Activated CD4-positive, alpha-beta T cell treated with anti-CD3 and anti-CD28 coated beads, Interleukin-2, amount 10 ng/mL, durations not matched to agents 7 days and 5 days (primary cell): ENCODE measurements at regions of chr14 and their contacts with region 1.

Region 1: GRCh38 chr14:103104654-103105452 is 10.3 kb downstream of the EXOC3L4 start:
- DNase-seq: peak; percentile 70
- H3K4me3 Mint-ChIP-seq: no peak overlapping the region
- H3K27ac Mint-ChIP-seq: no peak overlapping the region
- H3K4me1 Mint-ChIP-seq: peaks cover 4% of the 10 kb centered on the region
- H3K27me3 Mint-ChIP-seq: peaks cover 31% of the 10 kb centered on the region

Region 2: DNA sequence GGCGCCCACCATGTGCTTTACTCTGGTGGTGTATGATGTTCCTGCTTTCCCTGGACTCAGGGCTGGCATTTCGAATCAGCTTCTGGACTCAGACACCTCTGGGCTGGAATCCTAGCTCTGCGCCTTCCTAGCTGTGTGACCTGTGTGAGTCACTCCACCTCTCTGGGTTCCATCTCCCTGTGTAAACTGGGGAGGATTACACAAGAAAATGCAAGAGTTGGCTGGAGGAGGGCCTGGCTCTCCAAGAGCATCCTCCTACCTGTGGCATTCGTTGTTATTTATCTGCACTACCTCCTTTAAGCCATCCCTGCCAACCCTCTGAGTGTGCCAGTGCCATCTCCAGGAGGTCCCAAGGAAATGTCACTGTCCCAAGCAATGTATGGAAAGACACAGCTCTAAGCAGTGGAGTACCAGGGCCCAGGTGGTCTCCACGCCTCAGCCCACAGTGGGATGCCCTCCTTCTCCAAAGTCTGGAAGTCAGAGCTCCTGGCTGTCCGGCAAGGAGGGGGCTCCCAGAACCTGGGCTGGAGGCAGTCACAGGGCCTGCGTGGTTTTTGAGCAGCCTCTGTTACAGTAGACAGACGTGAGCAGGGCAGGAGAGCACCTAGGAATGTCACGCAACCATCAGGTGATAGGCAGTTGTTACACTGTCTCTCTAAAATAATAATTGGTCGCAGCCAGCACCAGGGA is 11.2 kb after region 1 on chr14:
- CTCF ChIA-PET with region 1: interaction called, 17 read pairs
- POLR2A ChIA-PET with region 1: no interaction called
- DNase-seq: no peak
- H3K4me3 Mint-ChIP-seq: no peak overlapping the region
- H3K27ac Mint-ChIP-seq: no peak overlapping the region
- H3K4me1 Mint-ChIP-seq: peaks cover 8% of the 10 kb centered on the region
- H3K27me3 Mint-ChIP-seq: peaks cover 11% of the 10 kb centered on the region

Region 3: DNA sequence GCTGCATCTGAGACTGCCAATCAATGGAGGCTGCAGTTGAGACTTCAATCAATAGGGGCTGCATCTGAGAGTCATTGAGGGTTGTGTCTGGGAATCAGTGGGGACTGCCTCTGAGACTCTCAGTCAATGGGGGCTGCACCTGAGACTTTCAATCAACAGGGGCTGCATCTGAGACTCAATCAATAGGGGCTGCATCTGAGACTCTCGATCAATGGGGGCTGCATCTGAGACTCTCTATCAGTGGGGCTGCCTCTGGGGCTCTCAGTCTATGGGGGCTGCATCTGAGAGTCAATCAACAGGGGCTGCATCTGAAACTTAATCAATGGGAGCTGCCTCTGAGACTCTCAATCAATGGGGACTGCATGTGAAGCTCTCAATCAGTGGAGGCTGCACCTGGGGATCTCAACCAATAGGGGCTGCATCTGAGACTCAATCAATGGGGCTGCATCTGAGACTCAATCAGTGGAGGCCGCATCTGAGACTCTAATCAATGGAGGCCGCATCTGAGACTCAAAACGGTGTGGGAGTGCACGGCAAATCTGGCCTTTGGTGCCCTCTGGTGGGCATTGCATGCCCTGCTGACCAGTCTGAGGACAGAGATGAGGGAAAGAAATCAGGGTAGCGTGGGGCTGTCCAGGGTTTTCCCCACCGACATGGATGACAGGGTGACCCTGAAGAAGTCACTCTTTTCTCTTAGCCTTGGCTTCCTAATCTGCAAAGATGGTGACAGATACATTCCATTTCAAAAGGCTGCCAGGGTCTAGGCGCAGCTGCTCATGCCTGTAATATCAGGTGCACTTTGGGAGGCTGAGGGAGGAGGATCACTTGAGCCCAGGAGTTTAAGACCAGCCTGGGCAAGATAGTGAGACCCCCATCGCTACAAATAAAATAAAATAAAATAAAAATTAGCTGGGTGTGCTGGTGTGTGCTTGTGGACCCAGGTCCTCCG is 187.8 kb after region 1 on chr14:
- CTCF ChIA-PET with region 1: interaction called, 12 read pairs
- POLR2A ChIA-PET with region 1: no interaction called
- DNase-seq: peak; percentile 75
- H3K4me3 Mint-ChIP-seq: no peak overlapping the region
- H3K27ac Mint-ChIP-seq: no peak overlapping the region
- H3K4me1 Mint-ChIP-seq: no peaks in the 10 kb centered on the region
- H3K27me3 Mint-ChIP-seq: peaks cover 8% of the 10 kb centered on the region